Activated CD4-positive, alpha-beta memory T cell treated with anti-CD3 and anti-CD28 coated beads for 36 hours (primary cell): ENCODE measurements at regions of chr10 and their contacts with region 1.

Region 1: DNA sequence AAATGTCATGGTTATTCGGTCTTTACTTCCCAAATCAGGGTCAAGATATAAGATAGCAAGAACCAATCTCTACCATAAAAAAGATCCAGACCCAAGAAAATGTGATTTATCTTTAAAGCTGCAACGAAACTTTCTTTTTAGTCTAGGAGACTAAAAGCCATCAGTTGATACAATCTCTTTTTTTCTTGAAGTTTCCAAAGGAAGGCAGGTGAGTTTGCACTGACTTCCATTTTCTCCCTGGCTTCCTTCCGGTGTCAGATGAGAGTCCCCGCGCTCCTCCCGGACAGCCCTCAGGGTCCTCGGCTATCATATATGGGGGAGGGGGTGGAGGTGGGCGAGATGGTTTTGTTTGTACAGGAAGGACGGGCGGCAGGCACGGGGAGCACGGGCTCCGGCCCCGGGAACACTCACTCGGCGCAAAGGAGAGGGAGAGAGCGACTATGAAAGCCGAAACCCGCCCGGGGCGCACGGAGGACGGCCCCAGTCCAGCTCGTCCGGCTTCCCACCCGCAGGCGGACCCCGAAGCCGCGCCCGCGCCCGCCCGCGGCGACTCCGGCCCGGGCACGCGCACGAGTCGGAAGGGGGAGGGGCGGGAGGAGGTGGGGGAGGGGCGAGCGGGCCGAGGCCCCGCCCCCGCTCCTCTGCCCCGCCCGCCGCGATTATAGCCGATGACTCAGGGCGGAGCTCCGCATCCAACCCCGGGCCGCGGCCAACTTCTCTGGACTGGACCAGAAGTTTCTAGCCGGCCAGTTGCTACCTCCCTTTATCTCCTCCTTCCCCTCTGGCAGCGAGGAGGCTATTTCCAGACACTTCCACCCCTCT is at the start of gene BAG3:
- DNase-seq: peak; percentile 87
- H3K4me3 Mint-ChIP-seq: peak within 1 kb of the TSS; percentile 95
- H3K27ac Mint-ChIP-seq: peak within 1 kb of the TSS; percentile 97
- H3K4me1 Mint-ChIP-seq: peaks cover 37% of the 10 kb centered on the region
- H3K27me3 Mint-ChIP-seq: no peaks in the 10 kb centered on the region
- total RNA-seq, gene BAG3: 26.8 to 28.1 TPM

Region 2: GRCh38 chr10:119131512-119132240 is 519.2 kb before region 1 on chr10:
- CTCF ChIA-PET with region 1: no interaction called
- POLR2A ChIA-PET with region 1: no interaction called
- intact Hi-C with region 1: loop called (anchors 5 kb)
- DNase-seq: peak; percentile 76
- H3K4me3 Mint-ChIP-seq: peak overlapping the region; percentile 80
- H3K27ac Mint-ChIP-seq: peak overlapping the region; percentile 100
- H3K4me1 Mint-ChIP-seq: peaks cover 60% of the 10 kb centered on the region
- H3K27me3 Mint-ChIP-seq: no peaks in the 10 kb centered on the region

Region 3: GRCh38 chr10:119517235-119518141 is 133.4 kb before region 1 on chr10:
- CTCF ChIA-PET with region 1: no interaction called
- POLR2A ChIA-PET with region 1: interaction called, 3 read pairs
- intact Hi-C with region 1: loop called (anchors 2 kb)
- DNase-seq: peak; percentile 85
- H3K4me3 Mint-ChIP-seq: peak overlapping the region; percentile 55
- H3K27ac Mint-ChIP-seq: peak overlapping the region; percentile 85
- H3K4me1 Mint-ChIP-seq: peaks cover 59% of the 10 kb centered on the region
- H3K27me3 Mint-ChIP-seq: no peaks in the 10 kb centered on the region

Region 4: DNA sequence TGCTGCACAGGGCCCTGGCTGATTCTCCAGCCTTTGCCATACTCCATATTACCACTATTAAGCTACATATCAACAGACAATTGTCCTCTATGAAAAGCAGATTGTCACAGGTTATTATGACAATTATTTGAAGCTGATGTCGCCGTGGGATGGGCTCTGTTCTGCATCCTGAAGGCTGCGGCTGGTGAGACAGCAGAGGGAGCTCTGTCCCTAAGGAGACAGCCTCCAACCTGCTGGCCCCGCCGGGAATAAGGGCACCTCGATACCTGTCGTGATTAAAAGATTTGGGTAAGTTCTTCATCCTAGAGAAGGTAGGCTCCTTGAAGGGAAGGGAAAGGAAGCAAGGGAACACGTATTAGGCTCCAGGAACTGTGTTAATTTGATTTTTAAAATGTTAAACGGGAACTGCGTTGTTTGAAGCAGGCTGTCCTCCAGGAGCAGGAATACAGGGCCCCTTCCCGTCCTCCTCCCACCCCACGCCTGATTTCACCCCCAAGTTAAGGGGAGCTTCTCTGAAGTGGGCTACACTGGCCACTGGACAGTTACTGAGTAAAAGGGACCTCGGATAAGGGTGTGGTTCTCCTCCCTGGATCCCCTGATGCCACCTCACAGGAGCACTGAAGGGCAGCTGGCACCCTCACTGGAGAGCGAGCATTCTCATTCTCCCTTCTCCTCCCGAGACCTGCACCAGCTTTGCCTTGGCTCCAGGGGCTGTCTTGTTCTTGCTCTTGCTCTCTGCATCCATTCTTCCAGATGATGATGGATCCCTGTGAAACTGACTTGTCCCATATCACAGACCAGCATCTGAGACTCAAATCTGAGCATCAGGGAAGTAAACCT is 42.4 kb before region 1 on chr10:
- CTCF ChIA-PET with region 1: no interaction called
- POLR2A ChIA-PET with region 1: no interaction called
- intact Hi-C with region 1: loop called (anchors 1 kb)
- DNase-seq: peak; percentile 49
- H3K4me3 Mint-ChIP-seq: no peak overlapping the region
- H3K27ac Mint-ChIP-seq: no peak overlapping the region
- H3K4me1 Mint-ChIP-seq: peaks cover 7% of the 10 kb centered on the region
- H3K27me3 Mint-ChIP-seq: peaks cover 3% of the 10 kb centered on the region

Region 5: DNA sequence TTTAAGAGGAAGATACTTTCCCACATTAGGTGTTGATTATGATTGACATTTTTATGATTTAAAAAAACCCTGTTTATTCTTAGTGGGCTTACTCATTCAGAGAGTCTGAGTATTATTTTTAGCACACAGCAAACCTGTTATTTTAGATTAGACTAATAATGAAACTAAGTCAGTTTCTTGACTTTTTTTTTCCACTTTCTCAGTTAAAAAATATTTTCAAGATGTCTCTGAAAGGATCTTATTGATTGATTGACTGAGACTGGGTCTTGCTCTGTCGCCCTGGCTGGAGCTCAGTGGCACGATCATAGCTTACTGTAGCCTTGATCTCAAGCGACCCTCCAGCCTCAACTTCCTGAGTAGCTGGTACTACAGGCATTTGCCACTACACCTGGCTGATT is 54.5 kb after region 1 on chr10:
- CTCF ChIA-PET with region 1: interaction called, 5 read pairs
- POLR2A ChIA-PET with region 1: interaction called, 4 read pairs
- intact Hi-C with region 1: loop called (anchors 2 kb)
- DNase-seq: peak; percentile 51
- H3K4me3 Mint-ChIP-seq: peak overlapping the region; percentile 55
- H3K27ac Mint-ChIP-seq: peak overlapping the region; percentile 92
- H3K4me1 Mint-ChIP-seq: peaks cover 79% of the 10 kb centered on the region
- H3K27me3 Mint-ChIP-seq: no peaks in the 10 kb centered on the region